ENCODE measurements at regions of chr1 and their contacts with region 1.

Region 1: DNA sequence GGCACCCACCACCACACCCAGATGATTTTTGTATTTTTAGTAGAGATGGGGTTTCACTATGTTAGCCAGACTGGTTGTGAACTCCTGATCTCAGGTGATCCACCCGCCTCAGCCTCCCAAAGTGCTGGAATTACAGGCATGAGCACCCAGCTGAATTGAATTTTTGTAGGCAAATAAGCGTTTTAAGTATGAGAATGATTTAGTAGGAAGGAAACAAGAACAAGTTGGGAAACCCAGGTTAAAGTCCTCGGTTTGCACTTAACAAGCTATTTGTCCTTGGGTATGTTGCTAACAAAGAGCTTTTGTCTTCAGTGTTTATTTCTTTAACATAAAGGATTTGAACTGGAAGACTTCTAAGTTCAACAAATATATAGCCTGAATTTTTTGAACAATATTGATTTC is 23.9 kb downstream of the BTF3L4 start:
- DNase-seq: no peak
- H3K4me3 Mint-ChIP-seq: no peak overlapping the region
- H3K27ac Mint-ChIP-seq: no peak overlapping the region
- H3K4me1 Mint-ChIP-seq: no peaks in the 10 kb centered on the region
- H3K27me3 Mint-ChIP-seq: no peaks in the 10 kb centered on the region

Region 2: DNA sequence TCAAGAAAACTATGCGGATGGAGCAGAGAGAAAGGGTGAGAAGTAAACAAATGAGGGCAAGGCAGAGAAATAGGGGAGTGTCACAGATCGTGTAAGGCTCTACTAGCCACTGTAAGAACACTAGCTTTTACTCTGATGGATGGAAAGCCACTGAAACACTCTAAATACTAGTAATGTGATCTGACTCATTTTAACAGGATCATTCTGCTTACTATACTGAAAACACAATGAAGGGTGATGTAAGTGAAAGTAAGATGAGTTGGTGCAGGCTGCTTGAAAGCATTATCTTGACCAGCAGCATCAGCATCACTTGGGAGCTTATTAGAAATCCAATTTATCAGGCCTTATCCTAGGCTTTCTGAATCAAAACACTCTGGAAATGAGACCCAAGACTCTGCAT is 440.1 kb after region 1 on chr1:
- CTCF ChIA-PET with region 1: no interaction called
- POLR2A ChIA-PET with region 1: interaction called, 12 read pairs
- DNase-seq: no peak
- H3K4me3 Mint-ChIP-seq: no peak overlapping the region
- H3K27ac Mint-ChIP-seq: no peak overlapping the region
- H3K4me1 Mint-ChIP-seq: peaks cover 28% of the 10 kb centered on the region
- H3K27me3 Mint-ChIP-seq: no peaks in the 10 kb centered on the region